Left ventricle myocardium superior (tissue), 1 donor: ENCODE measurements at regions of chr7 and their contacts with region 1.

Region 1: DNA sequence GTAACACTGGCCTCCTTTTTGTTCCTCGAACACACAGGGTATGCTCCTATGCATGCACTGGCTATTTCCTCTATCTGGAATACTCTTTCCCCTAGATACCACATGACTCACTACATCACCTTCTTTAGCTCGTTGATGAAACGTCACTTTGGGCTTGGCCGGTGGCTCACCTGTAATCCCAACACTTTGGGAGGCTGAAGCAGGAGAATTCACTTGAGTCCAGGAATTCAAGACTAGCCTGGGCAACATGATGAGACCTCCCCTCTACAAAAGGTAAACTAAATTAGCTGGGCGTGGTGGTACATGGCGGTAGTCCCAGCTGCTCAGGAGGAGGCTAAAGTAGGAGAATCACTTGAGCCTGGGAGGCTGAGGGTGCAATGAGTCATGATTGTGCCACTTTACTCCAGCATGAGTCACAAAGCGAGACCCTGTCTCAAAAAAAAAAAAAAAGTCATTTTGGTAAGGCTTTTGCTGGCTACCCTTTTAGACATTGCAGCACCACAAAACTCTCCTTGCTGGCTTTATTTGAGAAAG is 14.5 kb downstream of the ANKIB1 start:
- DNase-seq: no peak
- ATAC-seq: no peak

Region 2: GRCh38 chr7:92020636-92021035 is 239.7 kb before region 1 on chr7:
- intact Hi-C with region 1: no loop called
- DNase-seq: no peak
- ATAC-seq: no peak

Region 3: DNA sequence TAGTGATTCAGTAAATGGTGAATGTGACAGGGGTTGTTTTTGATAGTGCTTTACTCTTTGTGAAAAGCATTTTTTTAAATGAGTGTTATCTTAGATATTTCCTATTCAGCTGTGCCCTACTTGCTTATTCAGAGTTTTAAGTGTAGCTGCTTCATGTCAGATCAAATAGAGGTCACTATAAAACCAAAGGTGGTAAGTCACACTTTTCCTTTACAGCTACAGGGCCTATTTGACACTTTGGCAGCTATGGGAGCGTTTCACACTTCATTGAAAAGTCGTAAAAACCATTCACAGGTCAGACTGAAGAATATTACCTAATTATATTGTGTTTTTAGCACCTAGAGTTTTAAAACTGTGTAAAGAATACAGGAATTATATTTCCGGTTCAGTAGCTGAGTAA is 52.7 kb after region 1 on chr7:
- intact Hi-C with region 1: no loop called
- DNase-seq: no peak
- ATAC-seq: no peak

Region 4: DNA sequence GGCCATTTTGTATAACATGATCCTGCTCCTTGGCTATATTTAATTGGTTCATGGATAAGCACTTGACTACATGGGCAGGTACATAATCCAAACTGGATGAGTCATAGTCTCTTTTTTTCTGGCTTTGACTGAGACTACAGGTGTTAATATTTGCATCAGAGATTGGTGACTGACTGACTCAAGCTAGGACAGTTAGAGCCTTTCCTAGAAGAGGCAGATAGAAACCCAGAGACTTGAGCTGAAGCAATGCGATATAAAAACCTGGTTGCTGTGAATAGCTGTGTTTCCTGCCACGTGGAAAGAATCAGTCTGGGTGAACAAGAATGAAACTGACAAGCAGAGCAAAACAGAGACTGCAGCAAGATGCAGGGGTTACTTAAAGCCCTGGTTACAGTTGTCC is 776.5 kb after region 1 on chr7:
- intact Hi-C with region 1: loop called (anchors 10 kb)
- DNase-seq: no peak
- ATAC-seq: no peak